ENCODE measurements at regions of chr12 and their contacts with region 1.

Region 1: DNA sequence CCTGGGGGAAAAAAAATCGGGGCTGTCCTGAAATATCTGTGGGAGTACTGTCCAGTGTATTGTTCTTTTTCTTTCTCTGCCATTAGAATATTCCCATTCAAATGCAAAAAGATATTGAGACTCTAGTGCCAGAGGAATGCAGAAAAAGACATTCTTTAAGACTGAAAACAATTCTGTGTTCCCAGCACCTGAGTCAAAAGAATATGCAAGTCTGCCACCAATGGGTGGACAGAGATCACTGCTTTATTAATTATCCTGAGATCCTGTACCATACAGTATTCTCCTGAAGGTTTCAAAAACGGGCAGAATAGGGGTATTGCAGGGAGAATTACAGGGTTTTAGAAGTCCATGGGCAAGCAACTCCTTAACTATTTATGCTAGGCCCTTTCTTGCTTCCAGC is 361.8 kb downstream of the C12orf50 start:
- DNase-seq: peak; percentile 30
- H3K4me3 Mint-ChIP-seq: no peak overlapping the region
- H3K27ac Mint-ChIP-seq: no peak overlapping the region
- H3K4me1 Mint-ChIP-seq: peaks cover 6% of the 10 kb centered on the region
- H3K27me3 Mint-ChIP-seq: no peaks in the 10 kb centered on the region
- CTCF ChIP-seq: no peak

Region 2: GRCh38 chr12:86929962-86930361 is 737.4 kb before region 1 on chr12:
- CTCF ChIA-PET with region 1: no interaction called
- intact Hi-C with region 1: loop called (anchors 10 kb)
- DNase-seq: no peak
- H3K4me3 Mint-ChIP-seq: no peak overlapping the region
- H3K27ac Mint-ChIP-seq: no peak overlapping the region
- H3K4me1 Mint-ChIP-seq: no peaks in the 10 kb centered on the region
- H3K27me3 Mint-ChIP-seq: no peaks in the 10 kb centered on the region
- CTCF ChIP-seq: no peak

Region 3: DNA sequence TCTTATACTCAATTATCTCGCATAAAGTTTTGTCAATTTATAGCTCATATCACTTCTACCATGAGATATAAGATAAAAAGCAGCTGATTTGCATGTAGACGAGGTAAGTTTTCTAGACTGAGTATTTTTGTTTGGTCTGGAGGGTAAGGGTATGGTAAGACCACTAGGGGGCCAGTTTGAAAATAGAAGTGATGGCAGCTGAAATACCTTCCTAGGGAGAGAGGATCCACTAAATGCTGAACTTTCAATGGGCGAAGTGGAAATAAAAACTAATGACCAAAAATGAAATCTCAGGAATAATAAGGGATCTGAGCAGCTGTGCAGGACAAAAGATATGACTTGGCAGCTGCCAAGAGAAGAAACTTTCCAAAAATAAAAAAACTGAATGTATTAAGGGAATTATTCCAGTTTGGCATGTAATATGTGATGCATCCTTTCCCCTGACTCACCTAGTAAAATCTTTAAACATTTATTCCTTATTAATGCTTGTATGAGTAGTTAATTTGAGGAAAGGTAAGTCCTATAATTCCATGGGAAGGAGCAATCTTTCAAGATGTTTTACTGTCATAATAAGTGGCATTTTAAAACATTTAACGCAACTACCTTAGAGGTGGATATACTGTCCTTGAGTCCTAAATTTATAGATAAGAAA is 392.7 kb before region 1 on chr12:
- CTCF ChIA-PET with region 1: no interaction called
- intact Hi-C with region 1: loop called (anchors 1 kb)
- DNase-seq: peak; percentile 17
- H3K4me3 Mint-ChIP-seq: no peak overlapping the region
- H3K27ac Mint-ChIP-seq: no peak overlapping the region
- H3K4me1 Mint-ChIP-seq: no peaks in the 10 kb centered on the region
- H3K27me3 Mint-ChIP-seq: no peaks in the 10 kb centered on the region
- CTCF ChIP-seq: peak; percentile 67

Region 4: GRCh38 chr12:87344699-87345098 is 322.7 kb before region 1 on chr12:
- CTCF ChIA-PET with region 1: no interaction called
- intact Hi-C with region 1: loop called (anchors 1 kb)
- DNase-seq: no peak
- H3K4me3 Mint-ChIP-seq: no peak overlapping the region
- H3K27ac Mint-ChIP-seq: no peak overlapping the region
- H3K4me1 Mint-ChIP-seq: no peaks in the 10 kb centered on the region
- H3K27me3 Mint-ChIP-seq: no peaks in the 10 kb centered on the region
- CTCF ChIP-seq: no peak